ENCODE measurements at regions of chr7 and their contacts with region 1.

Region 1: GRCh38 chr7:100852048-100852872 is at the start of gene SLC12A9:
- DNase-seq: peak; percentile 71 to 91
- ATAC-seq: peak; percentile 90 to 94 (median 92)
- H3K4me3 ChIP-seq: peak within 1 kb of the TSS; percentile 71
- H3K4me3 Mint-ChIP-seq: peak within 1 kb of the TSS; percentile 97
- H3K27ac ChIP-seq: peak within 1 kb of the TSS; percentile 59
- H3K27ac Mint-ChIP-seq: peak within 1 kb of the TSS; percentile 71 to 87
- H3K4me1 ChIP-seq: peaks cover 28% of the 10 kb centered on the region
- H3K4me1 Mint-ChIP-seq: peaks cover 8 to 31% of the 10 kb centered on the region in 2 donors
- H3K27me3 ChIP-seq: no peaks in the 10 kb centered on the region
- H3K27me3 Mint-ChIP-seq: peaks cover 0 to 3% of the 10 kb centered on the region in 2 donors
- CTCF ChIP-seq: peak; percentile 98
- total RNA-seq, gene SLC12A9: 35.0 to 44.2 (median 38.1) TPM

Region 2: GRCh38 chr7:100705753-100706671 is 146.2 kb before region 1 on chr7 and contains the start of gene POP7:
- intact Hi-C with region 1: loop called (anchors 2 kb)
- DNase-seq: peak; percentile 98 to 99
- ATAC-seq: peak; percentile 96 to 99 (median 97)
- H3K4me3 ChIP-seq: peak within 1 kb of the TSS; percentile 86
- H3K4me3 Mint-ChIP-seq: peak within 1 kb of the TSS; percentile 98
- H3K27ac ChIP-seq: peak within 1 kb of the TSS; percentile 86
- H3K27ac Mint-ChIP-seq: peak within 1 kb of the TSS; percentile 89 to 97
- H3K4me1 ChIP-seq: peaks cover 16% of the 10 kb centered on the region
- H3K4me1 Mint-ChIP-seq: peaks cover 6 to 21% of the 10 kb centered on the region in 2 donors
- H3K27me3 ChIP-seq: no peaks in the 10 kb centered on the region
- H3K27me3 Mint-ChIP-seq: peaks cover 0 to 5% of the 10 kb centered on the region in 2 donors
- CTCF ChIP-seq: no peak
- total RNA-seq, gene POP7: 17.6 to 22.1 (median 17.6) TPM

Region 3: DNA sequence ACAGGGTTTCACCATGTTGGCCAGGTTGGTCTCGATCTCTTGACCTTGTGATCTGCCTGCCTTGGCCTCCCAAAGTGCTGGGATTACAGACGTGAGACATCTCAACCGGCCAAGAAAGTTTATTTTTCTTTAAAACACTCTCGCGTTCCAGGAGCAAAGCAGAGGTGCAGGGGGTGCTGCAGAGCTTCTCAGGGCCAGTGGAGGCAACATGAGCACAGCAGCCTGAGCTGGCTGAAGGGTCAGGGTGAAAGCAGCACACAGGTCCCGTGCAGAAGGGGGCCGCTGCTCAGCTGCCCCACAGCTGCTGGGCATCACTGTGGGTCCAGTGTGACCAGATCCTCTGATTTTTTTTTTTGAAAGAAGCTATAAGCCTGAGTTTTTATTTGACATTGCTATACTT is 71.0 kb before region 1 on chr7:
- intact Hi-C with region 1: no loop called
- DNase-seq: no peak
- ATAC-seq: no peak
- H3K4me3 ChIP-seq: no peak overlapping the region
- H3K4me3 Mint-ChIP-seq: no peak overlapping the region
- H3K27ac ChIP-seq: no peak overlapping the region
- H3K27ac Mint-ChIP-seq: no peak overlapping the region
- H3K4me1 ChIP-seq: no peaks in the 10 kb centered on the region
- H3K4me1 Mint-ChIP-seq: peaks cover 5 to 6% of the 10 kb centered on the region in 2 donors
- H3K27me3 ChIP-seq: no peaks in the 10 kb centered on the region
- H3K27me3 Mint-ChIP-seq: peaks cover 6 to 8% of the 10 kb centered on the region in 2 donors
- CTCF ChIP-seq: no peak

Region 4: GRCh38 chr7:100799014-100799896 is 53.0 kb before region 1 on chr7:
- intact Hi-C with region 1: loop called (anchors 5 kb)
- DNase-seq: peak in 1 of 2 donors; percentile 70
- ATAC-seq: peak in 1 of 3 donors; percentile 45
- H3K4me3 ChIP-seq: no peak overlapping the region
- H3K4me3 Mint-ChIP-seq: no peak overlapping the region
- H3K27ac ChIP-seq: no peak overlapping the region
- H3K27ac Mint-ChIP-seq: no peak overlapping the region
- H3K4me1 ChIP-seq: peaks cover 13% of the 10 kb centered on the region
- H3K4me1 Mint-ChIP-seq: peaks cover 4 to 10% of the 10 kb centered on the region in 2 donors
- H3K27me3 ChIP-seq: peaks cover 2% of the 10 kb centered on the region
- H3K27me3 Mint-ChIP-seq: peaks cover 7 to 18% of the 10 kb centered on the region in 2 donors
- CTCF ChIP-seq: peak; percentile 29